ENCODE measurements at regions of chr10 and their contacts with region 1.

Region 1: DNA sequence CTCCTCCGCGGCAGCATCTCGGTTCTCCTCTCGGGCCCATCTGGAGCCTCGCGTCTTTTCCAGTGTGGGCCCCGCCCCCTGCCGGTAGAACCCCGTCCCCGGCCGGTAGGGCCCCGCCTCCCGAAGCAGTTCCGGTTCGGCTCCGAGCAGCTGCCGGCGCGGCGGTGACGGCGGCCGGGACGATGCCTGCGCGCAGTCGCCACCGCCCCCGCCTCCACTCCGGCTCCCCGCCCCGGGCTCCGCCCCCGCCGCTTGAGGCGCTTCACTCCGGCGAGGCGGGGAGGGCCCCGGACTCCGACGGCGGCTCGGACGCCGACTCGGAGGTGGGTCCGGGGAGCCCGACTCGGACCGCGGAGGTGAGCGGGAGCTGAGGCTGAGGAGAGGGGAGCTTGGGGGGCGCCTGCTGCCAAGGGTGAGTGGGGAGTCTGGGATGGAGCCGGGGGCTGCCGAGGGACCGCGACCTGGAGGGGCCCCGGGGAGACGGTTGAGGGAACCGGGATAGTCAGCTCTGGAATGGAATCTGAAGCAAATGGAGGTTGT is at the start of gene SAMD8:
- DNase-seq: peak; percentile 97
- H3K4me3 Mint-ChIP-seq: peak within 1 kb of the TSS; percentile 95
- H3K27ac Mint-ChIP-seq: peak within 1 kb of the TSS; percentile 99
- H3K4me1 Mint-ChIP-seq: peaks cover 50% of the 10 kb centered on the region
- H3K27me3 Mint-ChIP-seq: no peaks in the 10 kb centered on the region
- total RNA-seq, gene SAMD8: 16.2 and 16.5 TPM in 2 replicates

Region 2: GRCh38 chr10:73997787-73998622 is 1113.4 kb before region 1 on chr10 and contains the start of gene VCL:
- intact Hi-C with region 1: loop called (anchors 5 kb)
- DNase-seq: peak; percentile 95
- H3K4me3 Mint-ChIP-seq: peak within 1 kb of the TSS; percentile 98
- H3K27ac Mint-ChIP-seq: peak within 1 kb of the TSS; percentile 100
- H3K4me1 Mint-ChIP-seq: peaks cover 59% of the 10 kb centered on the region
- H3K27me3 Mint-ChIP-seq: no peaks in the 10 kb centered on the region
- total RNA-seq, gene VCL: 24.4 and 26.0 TPM in 2 replicates

Region 3: DNA sequence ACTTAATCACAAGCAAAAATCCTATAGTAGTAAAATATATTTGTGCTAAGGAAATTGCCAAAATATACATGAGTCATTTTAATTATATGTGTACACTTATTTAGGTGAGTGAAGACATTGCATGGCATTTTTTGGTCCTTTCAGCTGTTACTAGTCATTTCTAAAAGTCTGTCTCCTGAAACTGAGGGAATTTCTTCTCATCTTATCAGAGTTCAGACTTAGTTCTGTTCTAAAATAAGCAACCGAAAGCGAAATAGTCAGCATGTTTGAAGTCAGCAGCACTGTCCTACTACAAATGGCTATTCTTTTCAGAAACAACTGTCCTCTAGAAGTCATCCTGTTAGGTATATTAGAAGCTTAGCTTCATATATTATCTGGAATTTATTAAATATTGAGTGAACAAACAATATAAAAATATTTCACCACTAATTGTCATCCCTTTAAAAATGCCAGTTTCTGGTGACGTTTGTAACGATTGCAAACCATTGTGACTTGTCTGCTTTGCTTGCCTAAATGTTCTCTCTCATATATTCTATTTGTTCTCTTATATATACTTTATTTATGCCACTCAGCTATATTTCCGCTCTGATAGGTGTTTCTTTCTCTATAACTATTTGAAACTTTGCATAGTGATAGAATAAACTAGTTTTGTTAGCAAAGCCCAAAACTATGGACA is 512.4 kb before region 1 on chr10:
- intact Hi-C with region 1: no loop called
- DNase-seq: no peak
- H3K4me3 Mint-ChIP-seq: no peak overlapping the region
- H3K27ac Mint-ChIP-seq: no peak overlapping the region
- H3K4me1 Mint-ChIP-seq: peaks cover 13% of the 10 kb centered on the region
- H3K27me3 Mint-ChIP-seq: no peaks in the 10 kb centered on the region

Region 4: GRCh38 chr10:75137533-75138438 is 26.3 kb after region 1 on chr10:
- intact Hi-C with region 1: loop called (anchors 1 kb)
- DNase-seq: no peak
- H3K4me3 Mint-ChIP-seq: no peak overlapping the region
- H3K27ac Mint-ChIP-seq: peak overlapping the region; percentile 20
- H3K4me1 Mint-ChIP-seq: peaks cover 27% of the 10 kb centered on the region
- H3K27me3 Mint-ChIP-seq: no peaks in the 10 kb centered on the region

Region 5: DNA sequence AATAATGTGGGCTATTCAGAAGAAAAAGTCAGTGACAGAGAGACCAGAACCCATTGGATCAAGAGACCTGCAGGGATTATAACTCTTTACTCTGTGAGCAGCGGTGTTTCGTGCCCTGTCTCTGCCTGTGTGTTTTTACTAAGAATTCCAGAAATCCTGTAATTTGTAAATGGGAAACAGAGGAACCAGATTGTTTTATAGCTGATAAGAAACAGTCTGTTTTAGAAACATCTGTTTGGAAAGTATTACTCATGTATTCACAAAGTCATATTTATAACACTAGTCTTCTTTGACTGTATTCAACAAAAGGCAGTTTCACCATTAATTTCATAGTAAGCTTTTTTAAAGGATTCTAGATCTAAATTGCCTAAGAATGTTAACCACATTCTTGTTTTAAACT is 69.2 kb after region 1 on chr10:
- intact Hi-C with region 1: loop called (anchors 5 kb)
- DNase-seq: no peak
- H3K4me3 Mint-ChIP-seq: no peak overlapping the region
- H3K27ac Mint-ChIP-seq: no peak overlapping the region
- H3K4me1 Mint-ChIP-seq: peaks cover 37% of the 10 kb centered on the region
- H3K27me3 Mint-ChIP-seq: no peaks in the 10 kb centered on the region